Calu3 (cell line): ENCODE measurements at regions of chr18 and their contacts with region 1.

Region 1: GRCh38 chr18:26511339-26512071 is 36.8 kb downstream of the KCTD1 start:
- DNase-seq: peak; percentile 67
- H3K4me3 Mint-ChIP-seq: peak overlapping the region; percentile 55
- H3K27ac Mint-ChIP-seq: peak overlapping the region; percentile 85
- H3K4me1 Mint-ChIP-seq: peaks cover 74% of the 10 kb centered on the region
- H3K27me3 Mint-ChIP-seq: no peaks in the 10 kb centered on the region
- CTCF ChIP-seq: no peak

Region 2: GRCh38 chr18:26487437-26487836 is 24.1 kb before region 1 on chr18:
- CTCF ChIA-PET with region 1: interaction called, 9 read pairs
- intact Hi-C with region 1: loop called (anchors 1 kb)
- DNase-seq: peak; percentile 86
- H3K4me3 Mint-ChIP-seq: peak overlapping the region; percentile 43
- H3K27ac Mint-ChIP-seq: peak overlapping the region; percentile 91
- H3K4me1 Mint-ChIP-seq: peaks cover 78% of the 10 kb centered on the region
- H3K27me3 Mint-ChIP-seq: no peaks in the 10 kb centered on the region
- CTCF ChIP-seq: no peak

Region 3: DNA sequence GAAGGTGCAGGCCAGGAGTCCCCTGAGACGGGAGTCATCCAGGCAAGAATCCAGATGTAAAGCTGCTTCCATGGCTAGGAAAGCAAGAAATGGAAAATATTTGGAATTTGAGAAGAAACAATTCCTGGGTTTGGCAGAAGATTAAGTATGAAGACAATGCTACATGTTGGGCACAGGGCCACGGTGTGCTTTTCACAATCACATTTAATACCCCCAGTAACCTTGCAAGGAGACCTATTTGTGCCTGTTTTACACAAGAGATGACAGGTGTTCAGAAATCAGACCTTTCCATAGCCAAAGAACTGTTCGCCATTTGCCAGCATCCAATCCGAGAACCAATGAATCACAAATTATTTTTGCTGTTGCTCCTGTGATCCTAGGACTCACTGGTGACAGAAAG is 13.6 kb before region 1 on chr18:
- CTCF ChIA-PET with region 1: no interaction called
- intact Hi-C with region 1: no loop called
- DNase-seq: no peak
- H3K4me3 Mint-ChIP-seq: no peak overlapping the region
- H3K27ac Mint-ChIP-seq: no peak overlapping the region
- H3K4me1 Mint-ChIP-seq: peaks cover 6% of the 10 kb centered on the region
- H3K27me3 Mint-ChIP-seq: no peaks in the 10 kb centered on the region
- CTCF ChIP-seq: no peak

Region 4: GRCh38 chr18:26548429-26549262 is 37.1 kb after region 1 on chr18 and contains the start of gene KCTD1:
- CTCF ChIA-PET with region 1: interaction called, 3 read pairs
- intact Hi-C with region 1: loop called (anchors 5 kb)
- DNase-seq: peak; percentile 73
- H3K4me3 Mint-ChIP-seq: peak within 1 kb of the TSS; percentile 80
- H3K27ac Mint-ChIP-seq: peak within 1 kb of the TSS; percentile 67
- H3K4me1 Mint-ChIP-seq: peaks cover 32% of the 10 kb centered on the region
- H3K27me3 Mint-ChIP-seq: no peaks in the 10 kb centered on the region
- CTCF ChIP-seq: no peak
- total RNA-seq, gene KCTD1: 54.1 and 63.2 TPM in 2 replicates